ENCODE measurements at regions of chr12 and their contacts with region 1.

Region 1: GRCh38 chr12:6965026-6965661 is 5.3 kb downstream of the PHB2 start:
- DNase-seq: peak; percentile 88
- H3K4me3 ChIP-seq: peak overlapping the region; percentile 98
- H3K27ac ChIP-seq: peak overlapping the region; percentile 93
- H3K4me1 ChIP-seq: peaks cover 52% of the 10 kb centered on the region
- H3K27me3 ChIP-seq: no peaks in the 10 kb centered on the region
- CTCF ChIP-seq: peak; percentile 99

Region 2: DNA sequence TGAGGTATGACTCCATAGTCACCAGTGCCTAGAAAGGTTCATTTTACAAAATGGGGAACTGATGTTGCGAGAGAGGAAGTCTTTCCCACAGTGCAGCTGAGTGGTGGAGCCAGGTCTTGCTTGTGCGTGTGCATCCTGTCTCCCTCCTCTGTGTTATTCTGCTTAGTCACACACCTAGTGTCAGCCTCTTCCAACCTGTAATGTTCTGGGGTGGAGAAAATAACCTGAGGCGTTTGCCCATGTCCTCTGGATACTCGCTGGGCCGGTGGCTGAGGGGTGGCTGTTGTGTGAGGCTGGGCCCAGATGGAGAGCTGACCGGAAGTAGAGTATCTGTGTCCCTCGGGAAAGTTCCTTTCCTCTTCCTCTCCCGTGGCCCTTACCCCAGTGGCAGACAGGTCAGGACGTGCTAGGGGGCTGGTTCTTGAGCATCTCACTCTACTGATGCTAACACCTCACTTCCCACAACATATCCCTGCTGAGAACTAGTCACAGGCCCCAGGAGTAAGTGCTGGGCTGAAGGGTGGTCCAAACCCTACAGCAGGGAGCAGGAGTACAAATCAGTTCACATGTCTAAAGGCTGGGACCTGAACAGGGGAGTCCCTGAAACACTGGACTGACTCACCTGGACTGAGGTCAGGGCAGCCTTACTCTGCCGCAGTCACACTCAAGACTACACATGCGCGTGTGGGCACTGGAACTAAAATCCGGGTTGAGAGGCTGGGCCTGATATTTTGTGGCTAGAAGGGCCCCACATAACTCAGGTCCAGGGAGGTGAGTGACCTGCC is 219.2 kb before region 1 on chr12:
- CTCF ChIA-PET with region 1: no interaction called
- POLR2A ChIA-PET with region 1: interaction called, 19 read pairs
- intact Hi-C with region 1: no loop called
- DNase-seq: peak; percentile 31 to 63
- H3K4me3 ChIP-seq: no peak overlapping the region
- H3K27ac ChIP-seq: peak overlapping the region; percentile 10; the same call in 1 of the 2 replicates
- H3K4me1 ChIP-seq: 0 out of 2 replicates have a peak, but pooled peaks cover 9% of the 10 kb centered on the region
- H3K27me3 ChIP-seq: no peaks in the 10 kb centered on the region
- CTCF ChIP-seq: no peak

Region 3: GRCh38 chr12:6829536-6830220 is 135.5 kb before region 1 on chr12:
- CTCF ChIA-PET with region 1: no interaction called
- POLR2A ChIA-PET with region 1: no interaction called
- intact Hi-C with region 1: no loop called
- DNase-seq: no peak
- H3K4me3 ChIP-seq: no peak overlapping the region
- H3K27ac ChIP-seq: no peak overlapping the region
- H3K4me1 ChIP-seq: no peaks in the 10 kb centered on the region
- H3K27me3 ChIP-seq: peaks cover 80% of the 10 kb centered on the region
- CTCF ChIP-seq: no peak

Region 4: DNA sequence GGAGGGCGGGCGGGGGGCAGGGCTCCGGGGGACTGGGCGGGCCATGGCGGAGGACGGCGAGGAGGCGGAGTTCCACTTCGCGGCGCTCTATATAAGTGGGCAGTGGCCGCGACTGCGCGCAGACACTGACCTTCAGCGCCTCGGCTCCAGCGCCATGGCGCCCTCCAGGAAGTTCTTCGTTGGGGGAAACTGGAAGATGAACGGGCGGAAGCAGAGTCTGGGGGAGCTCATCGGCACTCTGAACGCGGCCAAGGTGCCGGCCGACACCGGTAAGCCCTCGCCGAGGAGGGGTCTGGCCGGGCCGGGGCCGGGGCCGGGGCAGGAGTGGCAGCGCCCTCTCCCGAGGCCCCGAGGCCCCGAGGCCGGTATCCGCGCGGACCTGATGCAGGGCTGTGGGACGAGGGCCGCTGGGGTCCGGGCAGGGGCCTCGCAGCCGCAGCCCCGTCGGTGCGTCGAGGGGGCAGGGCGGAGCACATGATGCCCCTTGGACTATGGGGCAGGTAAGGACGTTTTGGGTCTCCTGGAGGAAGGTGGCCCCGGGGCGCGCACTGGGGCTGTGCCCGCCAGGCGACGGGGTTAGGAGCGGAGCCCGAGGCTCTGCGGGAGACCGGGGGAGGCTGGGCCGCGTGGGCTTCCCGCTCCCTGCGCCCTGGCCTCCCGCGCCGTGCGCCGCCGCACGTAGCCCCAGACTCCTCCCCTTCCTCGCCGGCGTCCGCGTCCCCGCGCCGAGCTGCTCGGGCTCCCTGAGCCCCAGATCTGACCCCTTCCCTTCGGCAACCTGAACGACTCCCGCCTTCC is 97.5 kb before region 1 on chr12 and contains the start of gene TPI1:
- CTCF ChIA-PET with region 1: interaction called, 6 read pairs
- POLR2A ChIA-PET with region 1: interaction called, 14 read pairs
- intact Hi-C with region 1: loop called (anchors 1 kb)
- DNase-seq: peak; percentile 46 to 82
- H3K4me3 ChIP-seq: peak within 1 kb of the TSS; percentile 97
- H3K27ac ChIP-seq: peak within 1 kb of the TSS; percentile 72
- H3K4me1 ChIP-seq: peaks cover 32% of the 10 kb centered on the region
- H3K27me3 ChIP-seq: no peaks in the 10 kb centered on the region
- CTCF ChIP-seq: no peak; the same call in 1 of the 2 replicates
- total RNA-seq, gene TPI1: 1,080 and 1,199 TPM in 2 replicates

Region 5: GRCh38 chr12:6927379-6928024 is 37.6 kb before region 1 on chr12 and contains the start of gene ATN1:
- CTCF ChIA-PET with region 1: interaction called, 15 read pairs
- POLR2A ChIA-PET with region 1: interaction called, 5 read pairs
- intact Hi-C with region 1: loop called (anchors 1 kb)
- DNase-seq: peak in 1 of 2 experiments; percentile 66
- H3K4me3 ChIP-seq: peak within 1 kb of the TSS; percentile 85
- H3K27ac ChIP-seq: peak within 1 kb of the TSS; percentile 75
- H3K4me1 ChIP-seq: peaks cover 53% of the 10 kb centered on the region
- H3K27me3 ChIP-seq: no peaks in the 10 kb centered on the region
- CTCF ChIP-seq: no peak
- total RNA-seq, gene ATN1: 158 and 159 TPM in 2 replicates

Region 6: DNA sequence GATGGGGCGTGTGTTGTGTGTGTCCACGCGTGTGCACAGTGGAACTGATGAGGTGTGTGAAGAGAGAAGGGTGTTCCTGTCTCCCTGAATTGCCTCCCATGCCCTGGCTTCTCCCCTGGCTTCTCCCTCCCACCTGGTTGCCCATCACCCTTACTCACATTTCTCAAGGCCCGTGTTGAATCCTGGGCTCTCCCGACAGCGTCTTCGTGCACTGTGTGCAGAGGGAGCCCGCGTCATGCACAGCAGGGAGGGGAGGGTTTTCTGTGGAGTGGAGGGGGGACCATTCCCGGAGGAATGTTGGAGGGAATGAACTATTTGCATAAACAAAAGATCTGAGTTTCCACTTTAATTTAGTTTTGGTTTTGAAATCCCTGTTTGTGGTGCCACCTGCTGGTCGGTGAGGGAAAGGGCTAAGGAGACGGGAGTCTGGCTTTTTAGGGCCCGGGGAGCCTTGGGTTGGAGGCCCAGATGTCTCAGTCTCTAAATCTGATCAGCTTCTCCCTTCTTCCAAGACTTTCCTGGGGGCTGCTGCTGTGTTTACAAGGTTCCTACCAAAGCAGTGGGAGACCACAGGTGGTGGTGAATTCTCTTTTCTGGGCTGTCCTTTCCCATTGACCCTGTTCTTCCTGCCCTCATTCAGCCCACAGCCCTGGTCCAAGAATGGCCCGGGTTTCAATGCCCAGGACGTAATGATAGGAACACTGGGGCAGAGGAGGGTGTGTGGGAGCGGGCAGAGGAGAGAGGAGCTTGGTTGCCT is 127.3 kb after region 1 on chr12 and contains the start of gene C1R:
- CTCF ChIA-PET with region 1: no interaction called
- POLR2A ChIA-PET with region 1: interaction called, 4 read pairs
- intact Hi-C with region 1: loop called (anchors 1 kb)
- DNase-seq: peak in 1 of 2 experiments; percentile 76
- H3K4me3 ChIP-seq: peak within 1 kb of the TSS; percentile 41; the same call in 1 of the 2 replicates
- H3K27ac ChIP-seq: no peak within 1 kb of the TSS
- H3K4me1 ChIP-seq: no peaks in the 10 kb centered on the region
- H3K27me3 ChIP-seq: no peaks in the 10 kb centered on the region
- CTCF ChIP-seq: peak; percentile 93
- total RNA-seq, gene C1R: 20.5 and 24.0 TPM in 2 replicates